Activated CD4-positive, alpha-beta T cell treated with anti-CD3 and anti-CD28 coated beads for 36 hours (primary cell): ENCODE measurements at regions of chr22 and their contacts with region 1.

Region 1: GRCh38 chr22:28329186-28330073 is 350.2 kb downstream of the TTC28 start:
- DNase-seq: no peak
- ATAC-seq: no peak
- H3K4me3 Mint-ChIP-seq: no peak overlapping the region
- H3K27ac Mint-ChIP-seq: no peak overlapping the region
- H3K4me1 Mint-ChIP-seq: peaks cover 3% of the 10 kb centered on the region
- H3K27me3 Mint-ChIP-seq: no peaks in the 10 kb centered on the region

Region 2: DNA sequence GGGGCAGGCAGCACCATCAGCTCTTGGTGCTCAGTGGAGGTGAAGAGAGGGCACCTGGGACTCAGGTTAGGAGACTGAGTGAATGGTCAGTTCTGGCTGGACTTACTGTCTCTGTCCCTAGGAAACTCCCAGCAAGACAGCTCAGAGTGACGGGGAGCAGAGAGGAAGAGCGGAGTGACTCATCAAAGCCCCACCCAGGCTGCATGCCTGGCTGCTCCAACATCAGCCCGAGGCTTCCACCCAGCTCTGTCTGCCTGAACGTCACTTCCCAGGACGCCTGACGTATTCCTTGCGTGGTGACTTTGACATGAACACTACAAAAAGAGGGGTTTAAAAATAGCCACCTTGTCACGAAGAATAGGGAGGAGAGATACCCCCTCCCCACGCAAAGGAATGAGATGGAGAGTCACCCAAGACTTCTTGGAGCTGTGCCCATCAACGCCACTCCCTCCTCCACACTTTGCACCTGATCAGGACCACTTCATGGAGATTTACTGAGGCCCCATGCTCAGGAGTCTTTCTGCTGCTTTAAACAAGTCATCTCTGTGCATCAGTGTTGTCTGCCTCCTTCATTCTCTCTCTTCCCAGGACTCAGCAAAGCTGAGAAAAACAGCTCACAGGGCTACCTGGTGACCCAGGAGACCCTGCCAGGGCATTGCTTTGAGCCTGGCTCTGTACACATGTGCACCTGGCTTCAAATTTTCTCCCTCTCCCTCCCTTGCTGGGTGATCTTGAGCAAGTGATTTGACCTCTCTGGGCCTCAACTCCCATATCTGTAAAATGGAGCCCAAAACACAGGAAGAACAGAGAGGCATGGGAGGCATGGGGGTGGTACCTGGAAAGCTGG is 611.0 kb before region 1 on chr22:
- CTCF ChIA-PET with region 1: no interaction called
- POLR2A ChIA-PET with region 1: no interaction called
- intact Hi-C with region 1: no loop called
- DNase-seq: no peak
- ATAC-seq: no peak
- H3K4me3 Mint-ChIP-seq: no peak overlapping the region
- H3K27ac Mint-ChIP-seq: no peak overlapping the region
- H3K4me1 Mint-ChIP-seq: no peaks in the 10 kb centered on the region
- H3K27me3 Mint-ChIP-seq: peaks cover 8% of the 10 kb centered on the region

Region 3: DNA sequence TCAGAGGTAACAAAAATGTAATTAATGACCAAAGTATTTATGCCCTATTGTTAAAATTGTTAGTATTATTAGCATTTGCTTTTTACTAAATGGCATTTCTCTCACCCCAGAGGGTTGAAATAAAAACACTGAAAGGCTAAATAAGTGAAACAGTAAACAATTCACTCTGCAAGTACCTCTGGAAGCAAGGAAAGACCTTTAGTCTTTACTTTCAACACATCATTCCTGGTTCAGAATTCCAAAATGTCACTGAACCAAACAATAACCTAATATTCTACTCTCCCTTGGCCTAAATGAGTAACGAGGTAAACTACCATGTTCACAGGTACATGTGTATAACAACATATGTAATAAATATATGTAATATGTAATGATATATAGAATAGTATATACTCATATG is 19.1 kb before region 1 on chr22:
- CTCF ChIA-PET with region 1: no interaction called
- POLR2A ChIA-PET with region 1: no interaction called
- intact Hi-C with region 1: loop called in 1 of 2 experiments (anchors 2 kb)
- DNase-seq: no peak
- ATAC-seq: no peak
- H3K4me3 Mint-ChIP-seq: no peak overlapping the region
- H3K27ac Mint-ChIP-seq: no peak overlapping the region
- H3K4me1 Mint-ChIP-seq: no peaks in the 10 kb centered on the region
- H3K27me3 Mint-ChIP-seq: no peaks in the 10 kb centered on the region

Region 4: GRCh38 chr22:28505416-28506149 is 176.2 kb after region 1 on chr22:
- CTCF ChIA-PET with region 1: no interaction called
- POLR2A ChIA-PET with region 1: no interaction called
- intact Hi-C with region 1: no loop called
- DNase-seq: no peak
- ATAC-seq: no peak
- H3K4me3 Mint-ChIP-seq: no peak overlapping the region
- H3K27ac Mint-ChIP-seq: no peak overlapping the region
- H3K4me1 Mint-ChIP-seq: no peaks in the 10 kb centered on the region
- H3K27me3 Mint-ChIP-seq: peaks cover 23% of the 10 kb centered on the region